ENCODE measurements at regions of chr18 and their contacts with region 1.

Region 1: GRCh38 chr18:21955757-21956652 is 213.4 kb upstream of the GATA6 start:
- DNase-seq: peak; percentile 78
- H3K4me3 Mint-ChIP-seq: no peak overlapping the region
- H3K27ac Mint-ChIP-seq: no peak overlapping the region
- H3K4me1 Mint-ChIP-seq: peaks cover 6% of the 10 kb centered on the region
- H3K27me3 Mint-ChIP-seq: peaks cover 16% of the 10 kb centered on the region
- CTCF ChIP-seq: peak; percentile 83

Region 2: DNA sequence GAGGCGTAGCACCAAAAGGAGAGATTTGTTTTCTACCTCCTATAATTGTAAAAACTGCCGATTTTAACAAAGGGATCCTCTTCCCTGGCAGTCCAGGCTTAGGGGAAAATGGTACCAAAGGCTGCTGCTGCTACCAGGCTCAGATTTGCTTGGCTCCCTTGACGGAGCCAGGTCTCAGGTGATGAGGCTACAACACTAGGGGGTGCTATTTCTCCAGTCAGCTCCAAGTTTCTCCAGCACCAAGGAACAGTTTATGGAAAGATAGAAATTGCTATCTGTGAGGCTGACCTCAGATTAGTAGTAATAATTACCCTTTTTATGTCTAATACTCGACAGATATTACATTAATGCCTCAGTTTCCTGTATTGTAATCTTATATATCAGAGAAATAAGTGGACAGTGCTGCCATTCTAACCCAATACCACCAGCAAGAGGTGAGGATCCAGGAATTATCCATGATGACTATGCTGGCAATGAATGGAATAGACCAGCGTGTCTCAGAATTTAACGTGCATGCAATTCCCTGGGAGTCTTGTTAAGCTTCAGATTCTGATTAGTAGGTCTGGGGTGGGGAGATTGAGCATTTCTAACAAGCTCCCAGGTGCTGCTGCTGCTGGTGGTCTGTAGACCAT is 466.8 kb before region 1 on chr18:
- CTCF ChIA-PET with region 1: interaction called, 3 read pairs
- POLR2A ChIA-PET with region 1: no interaction called
- intact Hi-C with region 1: loop called (anchors 10 kb)
- DNase-seq: peak; percentile 74
- H3K4me3 Mint-ChIP-seq: no peak overlapping the region
- H3K27ac Mint-ChIP-seq: no peak overlapping the region
- H3K4me1 Mint-ChIP-seq: peaks cover 8% of the 10 kb centered on the region
- H3K27me3 Mint-ChIP-seq: no peaks in the 10 kb centered on the region
- CTCF ChIP-seq: peak; percentile 67

Region 3: DNA sequence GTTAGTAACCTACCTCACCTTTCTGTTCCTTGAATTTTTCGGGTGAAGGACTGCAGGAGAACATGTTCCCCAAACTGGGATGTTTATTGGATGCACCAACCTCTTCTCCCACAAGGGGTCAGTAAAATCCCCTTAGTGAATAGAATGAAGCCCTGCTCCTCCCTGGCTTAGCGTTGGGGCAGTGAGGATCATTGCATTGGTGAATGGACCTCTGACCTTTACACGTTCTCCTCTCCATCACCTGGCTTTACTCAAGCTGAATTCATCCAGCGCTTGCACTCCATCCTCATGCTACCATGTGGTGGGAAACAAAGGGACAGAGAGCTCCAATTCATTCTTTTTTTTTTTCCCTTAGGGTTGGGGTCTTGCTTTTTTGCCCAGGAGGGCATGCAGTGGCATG is 58.2 kb before region 1 on chr18:
- CTCF ChIA-PET with region 1: no interaction called
- POLR2A ChIA-PET with region 1: no interaction called
- intact Hi-C with region 1: loop called (anchors 1 kb)
- DNase-seq: peak; percentile 73
- H3K4me3 Mint-ChIP-seq: no peak overlapping the region
- H3K27ac Mint-ChIP-seq: no peak overlapping the region
- H3K4me1 Mint-ChIP-seq: no peaks in the 10 kb centered on the region
- H3K27me3 Mint-ChIP-seq: no peaks in the 10 kb centered on the region
- CTCF ChIP-seq: peak; percentile 78

Region 4: DNA sequence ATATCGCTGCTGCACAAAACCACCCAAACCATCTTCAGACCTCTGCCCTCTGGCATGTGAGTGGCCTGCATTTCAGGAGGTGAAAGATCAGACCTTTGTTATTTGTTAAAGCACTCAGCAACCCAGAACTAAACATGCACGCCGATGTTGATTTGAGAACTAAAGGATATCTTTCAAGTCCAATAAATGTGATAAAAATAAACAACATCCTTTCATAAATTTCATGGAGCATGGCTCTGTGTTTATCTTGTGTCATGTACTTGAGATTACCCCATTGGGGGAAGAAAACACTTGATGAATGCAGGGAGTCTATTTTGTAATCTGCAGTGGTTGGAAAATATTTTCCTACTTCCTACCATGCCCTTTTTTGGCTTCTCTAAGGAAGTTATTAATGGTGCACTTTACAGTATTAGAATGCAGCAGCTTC is 142.6 kb after region 1 on chr18:
- CTCF ChIA-PET with region 1: no interaction called
- POLR2A ChIA-PET with region 1: no interaction called
- intact Hi-C with region 1: no loop called
- DNase-seq: no peak
- H3K4me3 Mint-ChIP-seq: no peak overlapping the region
- H3K27ac Mint-ChIP-seq: no peak overlapping the region
- H3K4me1 Mint-ChIP-seq: no peaks in the 10 kb centered on the region
- H3K27me3 Mint-ChIP-seq: no peaks in the 10 kb centered on the region
- CTCF ChIP-seq: no peak

Measured in MCF 10A (cell line).